Prostate gland (tissue), 2 donors: ENCODE measurements at regions of chr10 and their contacts with region 1.

Region 1: DNA sequence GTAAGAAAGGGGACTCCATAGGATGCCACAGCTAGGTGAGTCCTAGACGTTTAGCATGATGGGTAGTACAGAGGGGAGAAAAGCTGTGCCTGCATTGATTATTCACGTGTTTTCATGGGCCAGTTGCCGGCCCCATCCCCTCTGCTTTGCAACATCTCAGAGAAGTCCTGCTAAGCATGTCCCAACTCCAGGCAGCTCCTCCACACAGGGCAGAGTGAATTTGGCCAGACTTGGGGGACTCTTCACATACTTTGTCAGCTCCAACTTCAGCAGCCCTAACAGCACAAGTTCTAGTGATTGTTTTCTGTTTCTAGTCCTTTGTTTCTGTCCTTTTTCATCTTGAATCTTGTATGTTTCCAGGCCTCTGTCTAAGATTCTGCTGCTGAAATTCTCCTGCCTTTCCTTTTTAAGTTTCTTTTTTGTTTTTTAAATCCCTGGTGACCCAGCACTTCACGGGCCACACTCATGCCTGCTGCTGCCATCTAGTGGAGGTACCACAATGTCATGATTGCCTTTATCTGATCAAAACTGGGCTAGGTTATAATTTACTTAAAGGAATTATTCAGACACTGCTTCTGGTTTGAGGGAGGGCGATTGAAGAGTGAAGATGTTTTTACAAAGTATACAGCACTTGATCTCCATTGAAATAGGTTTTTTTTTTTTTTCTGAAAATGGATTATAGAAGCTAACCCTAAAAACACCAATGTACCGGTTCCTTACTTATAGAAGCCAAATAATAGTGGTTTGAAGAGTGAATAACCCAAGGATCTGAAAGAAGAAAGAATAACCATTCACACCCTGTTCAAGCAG is 276.9 kb downstream of the CSTF2T start:
- DNase-seq: peak; percentile 33
- H3K4me3 ChIP-seq: no peak overlapping the region
- H3K27ac ChIP-seq: no peak overlapping the region
- H3K4me1 ChIP-seq: no peaks in the 10 kb centered on the region
- H3K27me3 ChIP-seq: no peaks in the 10 kb centered on the region
- CTCF ChIP-seq: peak; percentile 37 to 72 (median 66)
- POLR2A ChIP-seq: no peak

Region 2: DNA sequence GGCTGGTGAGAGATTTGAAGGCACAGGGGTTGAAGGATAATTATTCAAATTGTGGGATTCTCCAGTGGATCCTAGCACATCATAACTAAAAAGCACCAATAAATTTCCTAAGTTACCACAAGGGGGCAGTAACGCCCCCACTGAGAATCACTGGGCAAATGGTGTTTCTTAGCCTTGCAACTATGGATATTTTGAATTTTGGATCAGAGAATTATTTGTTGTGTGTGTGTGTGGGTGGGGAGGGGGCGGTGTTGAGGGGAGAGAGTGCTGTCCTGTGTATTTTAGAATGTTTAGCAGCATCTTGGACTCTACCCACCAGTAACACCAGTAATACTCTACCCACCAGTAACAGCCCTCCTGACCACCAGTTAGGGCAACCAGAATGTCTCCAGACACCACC is 411.5 kb before region 1 on chr10:
- intact Hi-C with region 1: loop called (anchors 10 kb)
- DNase-seq: no peak
- H3K4me3 ChIP-seq: no peak overlapping the region
- H3K27ac ChIP-seq: no peak overlapping the region
- H3K4me1 ChIP-seq: no peaks in the 10 kb centered on the region
- H3K27me3 ChIP-seq: no peaks in the 10 kb centered on the region
- CTCF ChIP-seq: peak; percentile 40 to 76 (median 52)
- POLR2A ChIP-seq: no peak

Region 3: DNA sequence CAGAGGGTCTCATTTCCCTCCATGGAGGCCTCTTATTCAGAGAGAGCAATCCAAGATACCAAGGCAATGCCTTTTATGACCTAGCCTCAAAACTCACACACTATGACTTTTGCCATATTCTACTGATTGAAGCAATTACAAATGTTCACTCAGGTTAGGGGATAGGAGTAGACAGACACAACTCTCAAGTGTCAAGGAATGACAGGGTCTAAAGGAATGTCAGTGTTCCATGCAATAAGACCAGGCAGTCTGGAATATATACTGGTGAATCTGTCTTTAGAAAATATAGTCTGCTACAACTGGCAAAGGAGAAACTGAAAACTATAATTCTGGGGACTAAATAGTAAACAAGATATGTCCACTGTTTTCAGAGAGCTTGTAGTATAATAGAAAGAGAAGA is 64.3 kb before region 1 on chr10:
- intact Hi-C with region 1: no loop called
- DNase-seq: no peak
- H3K4me3 ChIP-seq: no peak overlapping the region
- H3K27ac ChIP-seq: no peak overlapping the region
- H3K4me1 ChIP-seq: no peaks in the 10 kb centered on the region
- H3K27me3 ChIP-seq: no peaks in the 10 kb centered on the region
- CTCF ChIP-seq: no peak
- POLR2A ChIP-seq: no peak

Region 4: GRCh38 chr10:51960494-51960895 is 538.0 kb after region 1 on chr10:
- intact Hi-C with region 1: loop called (anchors 10 kb)
- DNase-seq: no peak
- H3K4me3 ChIP-seq: no peak overlapping the region
- H3K27ac ChIP-seq: no peak overlapping the region
- H3K4me1 ChIP-seq: no peaks in the 10 kb centered on the region
- H3K27me3 ChIP-seq: no peaks in the 10 kb centered on the region
- CTCF ChIP-seq: peak in 3 of 4 experiments; percentile 38 to 59 (median 46)
- POLR2A ChIP-seq: no peak